ENCODE measurements at regions of chr7 and their contacts with region 1.

Region 1: GRCh38 chr7:111855161-111855856 is 293.0 kb upstream of the IMMP2L start:
- DNase-seq: peak; percentile 68
- H3K4me3 ChIP-seq: no peak overlapping the region
- H3K27ac ChIP-seq: no peak overlapping the region
- H3K27me3 ChIP-seq: no peaks in the 10 kb centered on the region
- CTCF ChIP-seq: peak; percentile 82

Region 2: DNA sequence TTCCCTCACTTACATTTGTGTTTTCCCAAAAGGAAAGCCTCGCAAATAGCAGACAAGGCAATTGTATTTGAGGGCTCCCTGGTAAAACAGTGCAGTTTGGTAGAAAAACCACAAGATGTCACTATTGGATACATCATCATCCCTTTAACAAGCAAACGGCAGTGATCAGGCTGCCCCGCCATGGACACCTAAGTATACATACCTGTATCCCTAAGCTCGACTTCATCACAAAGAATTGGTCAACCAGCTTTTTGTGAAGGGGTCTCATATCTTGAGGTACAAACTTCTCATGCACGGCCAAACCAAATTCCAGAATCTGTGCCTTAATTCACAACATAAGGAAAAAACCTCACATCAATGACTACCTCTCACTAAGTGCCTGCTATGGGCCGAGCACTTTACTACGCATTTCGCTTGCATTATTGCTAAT is 113.5 kb before region 1 on chr7:
- CTCF ChIA-PET with region 1: interaction called, 82 read pairs
- POLR2A ChIA-PET with region 1: no interaction called
- DNase-seq: peak; percentile 45
- H3K4me3 ChIP-seq: no peak overlapping the region
- H3K27ac ChIP-seq: no peak overlapping the region
- H3K27me3 ChIP-seq: no peaks in the 10 kb centered on the region
- CTCF ChIP-seq: peak; percentile 77

Region 3: GRCh38 chr7:111763221-111763801 is 92.0 kb before region 1 on chr7:
- CTCF ChIA-PET with region 1: interaction called, 83 read pairs
- POLR2A ChIA-PET with region 1: interaction called, 4 read pairs
- DNase-seq: peak; percentile 32
- H3K4me3 ChIP-seq: no peak overlapping the region
- H3K27ac ChIP-seq: no peak overlapping the region
- H3K27me3 ChIP-seq: no peaks in the 10 kb centered on the region
- CTCF ChIP-seq: peak; percentile 77

Region 4: DNA sequence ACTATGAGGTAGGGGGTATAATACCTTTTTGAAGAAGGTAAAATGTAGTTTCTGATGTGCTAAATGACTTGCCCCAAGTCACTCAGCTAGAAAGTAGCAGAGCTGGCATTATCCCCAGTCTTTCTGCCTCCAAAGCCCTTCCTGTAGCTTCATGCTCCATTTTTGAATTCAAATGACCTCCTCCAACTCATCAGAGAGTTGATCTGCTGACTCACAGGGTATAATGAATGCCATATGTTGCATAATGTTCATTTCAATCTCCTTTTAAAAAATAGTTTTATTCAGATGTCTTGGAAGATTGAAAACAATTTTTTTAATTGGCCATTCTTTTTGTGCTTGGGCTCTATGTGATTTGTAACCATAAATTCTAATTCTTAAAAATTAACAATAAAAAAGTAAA is 20.2 kb before region 1 on chr7:
- CTCF ChIA-PET with region 1: interaction called, 20 read pairs
- POLR2A ChIA-PET with region 1: no interaction called
- DNase-seq: peak; percentile 43
- H3K4me3 ChIP-seq: no peak overlapping the region
- H3K27ac ChIP-seq: no peak overlapping the region
- H3K27me3 ChIP-seq: no peaks in the 10 kb centered on the region
- CTCF ChIP-seq: no peak

Region 5: DNA sequence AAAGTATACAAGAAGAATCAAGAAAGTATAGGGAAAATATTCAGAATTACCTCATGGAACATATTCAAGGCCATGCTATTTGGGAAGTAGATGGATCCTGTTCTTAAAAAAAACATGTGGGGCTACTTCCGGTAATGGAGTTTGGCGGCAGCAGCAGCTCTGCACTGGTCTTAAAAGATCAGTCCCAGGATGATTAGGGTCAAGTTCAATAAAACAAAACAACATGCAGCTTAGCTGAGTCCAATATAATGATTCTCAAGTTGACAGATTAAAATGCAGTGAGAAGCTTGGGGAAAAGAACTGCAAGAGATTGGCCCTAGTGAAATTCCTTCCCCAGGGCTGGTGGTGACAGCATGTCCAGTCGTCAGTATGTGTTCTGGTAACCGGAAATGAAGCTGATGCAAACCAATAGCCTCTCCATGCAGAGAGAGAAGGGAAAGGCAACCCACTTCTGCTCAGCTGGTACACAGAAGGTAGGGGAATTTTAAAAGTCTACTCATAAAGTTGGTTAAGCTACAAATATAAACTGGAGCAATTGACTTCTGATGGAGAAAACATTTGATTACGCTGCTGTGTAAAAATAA is 12.1 kb after region 1 on chr7:
- CTCF ChIA-PET with region 1: interaction called, 79 read pairs
- POLR2A ChIA-PET with region 1: interaction called, 4 read pairs
- DNase-seq: no peak
- H3K4me3 ChIP-seq: no peak overlapping the region
- H3K27ac ChIP-seq: no peak overlapping the region
- H3K27me3 ChIP-seq: no peaks in the 10 kb centered on the region
- CTCF ChIP-seq: no peak

Region 6: DNA sequence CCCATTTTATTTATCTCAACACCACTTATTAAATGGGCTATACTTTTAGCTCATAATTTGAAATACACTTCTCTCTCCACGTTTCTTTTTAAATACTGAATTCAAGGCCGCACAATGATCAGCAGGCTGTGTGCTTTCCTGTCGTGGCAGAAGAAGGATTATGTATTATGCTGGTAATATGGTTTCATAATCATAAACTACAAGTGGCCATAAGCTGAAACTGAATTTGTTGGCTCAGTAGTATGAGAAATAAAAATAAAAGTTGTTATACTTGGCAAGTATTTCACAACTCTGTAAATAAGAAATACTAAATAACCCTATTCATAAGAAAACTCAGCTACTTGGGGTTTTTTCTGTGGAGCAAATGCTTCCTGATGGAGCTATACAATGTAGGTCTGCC is 37.3 kb after region 1 on chr7:
- CTCF ChIA-PET with region 1: interaction called, 10 read pairs
- POLR2A ChIA-PET with region 1: no interaction called
- DNase-seq: no peak
- H3K4me3 ChIP-seq: no peak overlapping the region
- H3K27ac ChIP-seq: no peak overlapping the region
- H3K27me3 ChIP-seq: no peaks in the 10 kb centered on the region
- CTCF ChIP-seq: no peak

Region 7: GRCh38 chr7:112226701-112227276 is 371.5 kb after region 1 on chr7:
- CTCF ChIA-PET with region 1: no interaction called
- POLR2A ChIA-PET with region 1: no interaction called
- DNase-seq: no peak
- H3K4me3 ChIP-seq: no peak overlapping the region
- H3K27ac ChIP-seq: no peak overlapping the region
- H3K27me3 ChIP-seq: no peaks in the 10 kb centered on the region
- CTCF ChIP-seq: no peak